GM12878 (cell line): ENCODE measurements at regions of chr12 and their contacts with region 1.

Region 1: GRCh38 chr12:569803-570434 is 93.3 kb downstream of the NINJ2 start:
- DNase-seq: no peak
- ATAC-seq: peak; percentile 97
- H3K4me3 ChIP-seq: peak overlapping the region; percentile 64
- H3K27ac ChIP-seq: no peak overlapping the region
- H3K4me1 ChIP-seq: no peaks in the 10 kb centered on the region
- H3K27me3 ChIP-seq: no peaks in the 10 kb centered on the region
- CTCF ChIP-seq: peak; percentile 91 to 94 (median 92)
- EP300 ChIP-seq: no peak
- POLR2A ChIP-seq: no peak
- RAD21 ChIP-seq: peak; percentile 92

Region 2: DNA sequence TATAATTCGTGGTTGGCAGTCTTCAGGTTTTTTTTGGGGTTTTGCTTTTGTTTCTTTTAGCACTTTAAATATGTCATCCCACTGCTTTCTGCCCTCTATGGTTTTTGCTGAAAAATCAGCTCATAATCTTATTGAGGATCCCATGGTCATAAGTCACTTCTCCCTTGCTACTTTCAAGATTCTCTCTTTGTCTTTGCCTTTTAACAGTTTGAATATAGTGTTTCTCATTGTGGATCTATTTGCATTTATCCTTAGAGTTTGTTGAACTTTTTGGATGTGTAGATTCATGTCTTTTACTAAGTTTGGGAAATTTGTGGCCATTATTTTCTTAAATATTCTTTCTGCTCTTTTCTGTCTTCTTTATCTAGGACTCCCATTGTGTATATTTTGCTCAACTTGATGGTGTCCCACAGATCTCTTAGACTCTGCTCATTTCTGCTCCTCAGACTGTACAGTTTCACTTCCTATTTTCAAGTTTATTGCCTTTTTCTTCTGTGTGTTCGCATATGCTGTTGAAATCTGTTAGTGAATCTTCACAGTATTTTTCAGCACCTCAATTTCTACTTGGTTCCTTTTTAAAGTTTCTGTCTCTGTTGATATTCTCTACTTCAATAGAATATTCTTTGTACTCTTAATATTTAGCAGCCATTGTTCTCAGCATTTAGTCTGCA is 253.2 kb after region 1 on chr12:
- CTCF ChIA-PET with region 1: interaction called, 50 read pairs
- POLR2A ChIA-PET with region 1: no interaction called
- RAD21 ChIA-PET with region 1: no interaction called
- SMC1A ChIA-PET with region 1: interaction called, 39 read pairs
- in situ Hi-C with region 1: no loop called
- intact Hi-C with region 1: no loop called
- DNase-seq: peak; percentile 82
- ATAC-seq: peak; percentile 99
- H3K4me3 ChIP-seq: peak overlapping the region; percentile 21; the same call in 1 of the 2 replicates
- H3K27ac ChIP-seq: peak overlapping the region; percentile 54
- H3K4me1 ChIP-seq: peaks cover 14% of the 10 kb centered on the region; the same call in 1 of the 2 replicates
- H3K27me3 ChIP-seq: no peaks in the 10 kb centered on the region
- CTCF ChIP-seq: no peak
- EP300 ChIP-seq: peak in 1 of 2 experiments; percentile 82; a peak in 2 of 4 replicates
- POLR2A ChIP-seq: no peak
- RAD21 ChIP-seq: no peak

Region 3: GRCh38 chr12:879641-880040 is 309.7 kb after region 1 on chr12:
- CTCF ChIA-PET with region 1: interaction called, 3 read pairs
- POLR2A ChIA-PET with region 1: no interaction called
- RAD21 ChIA-PET with region 1: no interaction called
- SMC1A ChIA-PET with region 1: no interaction called
- in situ Hi-C with region 1: no loop called
- intact Hi-C with region 1: loop called (anchors 10 kb)
- DNase-seq: no peak
- ATAC-seq: no peak
- H3K4me3 ChIP-seq: no peak overlapping the region
- H3K27ac ChIP-seq: no peak overlapping the region
- H3K4me1 ChIP-seq: no peaks in the 10 kb centered on the region; the same call in 1 of the 2 replicates
- H3K27me3 ChIP-seq: no peaks in the 10 kb centered on the region
- CTCF ChIP-seq: no peak
- EP300 ChIP-seq: no peak
- POLR2A ChIP-seq: no peak
- RAD21 ChIP-seq: no peak

Region 4: DNA sequence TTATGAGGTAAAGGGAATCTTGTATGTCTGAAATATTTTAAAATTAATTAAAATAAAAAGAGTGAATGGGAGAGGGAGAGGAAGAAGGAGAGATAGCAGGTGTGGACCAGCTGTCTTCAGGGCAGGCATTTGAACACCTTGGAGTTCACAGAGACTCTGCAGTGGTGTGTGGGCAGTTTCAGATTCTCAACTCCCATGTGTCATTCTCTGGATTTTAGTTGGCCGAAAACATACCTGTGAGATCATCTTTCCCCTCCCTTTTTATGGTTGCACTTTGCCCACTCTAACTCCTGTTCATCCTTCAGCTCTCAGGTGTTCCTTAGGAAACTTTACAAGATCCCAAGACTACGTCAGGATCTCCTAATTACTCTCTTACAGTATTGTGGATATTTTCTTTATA is 529.2 kb after region 1 on chr12:
- CTCF ChIA-PET with region 1: no interaction called
- POLR2A ChIA-PET with region 1: no interaction called
- RAD21 ChIA-PET with region 1: no interaction called
- SMC1A ChIA-PET with region 1: no interaction called
- in situ Hi-C with region 1: loop called (anchors 5 kb)
- intact Hi-C with region 1: loop called (anchors 5 kb)
- DNase-seq: peak; percentile 53
- ATAC-seq: peak; percentile 86
- H3K4me3 ChIP-seq: no peak overlapping the region
- H3K27ac ChIP-seq: peak overlapping the region; percentile 68
- H3K4me1 ChIP-seq: peaks cover 27% of the 10 kb centered on the region
- H3K27me3 ChIP-seq: no peaks in the 10 kb centered on the region
- CTCF ChIP-seq: no peak
- EP300 ChIP-seq: peak; percentile 44 to 73; a peak in 3 of 4 replicates
- POLR2A ChIP-seq: no peak
- RAD21 ChIP-seq: no peak